Activated CD8-positive, alpha-beta T cell treated with anti-CD3 and anti-CD28 coated beads for 36 hours (primary cell): ENCODE measurements at regions of chr6 and their contacts with region 1.

Region 1: GRCh38 chr6:1524040-1524480 is 85.7 kb upstream of the FOXC1 start:
- DNase-seq: peak; percentile 69
- ATAC-seq: peak; percentile 71
- H3K4me3 Mint-ChIP-seq: peak overlapping the region; percentile 29
- H3K27ac Mint-ChIP-seq: no peak overlapping the region
- H3K4me1 Mint-ChIP-seq: peaks cover 22% of the 10 kb centered on the region
- H3K27me3 Mint-ChIP-seq: peaks cover 6% of the 10 kb centered on the region
- CTCF ChIP-seq: peak; percentile 78

Region 2: GRCh38 chr6:1547785-1548184 is 23.7 kb after region 1 on chr6:
- CTCF ChIA-PET with region 1: interaction called, 10 read pairs
- POLR2A ChIA-PET with region 1: no interaction called
- intact Hi-C with region 1: no loop called
- DNase-seq: no peak
- ATAC-seq: no peak
- H3K4me3 Mint-ChIP-seq: no peak overlapping the region
- H3K27ac Mint-ChIP-seq: no peak overlapping the region
- H3K4me1 Mint-ChIP-seq: no peaks in the 10 kb centered on the region
- H3K27me3 Mint-ChIP-seq: peaks cover 1% of the 10 kb centered on the region
- CTCF ChIP-seq: no peak

Region 3: DNA sequence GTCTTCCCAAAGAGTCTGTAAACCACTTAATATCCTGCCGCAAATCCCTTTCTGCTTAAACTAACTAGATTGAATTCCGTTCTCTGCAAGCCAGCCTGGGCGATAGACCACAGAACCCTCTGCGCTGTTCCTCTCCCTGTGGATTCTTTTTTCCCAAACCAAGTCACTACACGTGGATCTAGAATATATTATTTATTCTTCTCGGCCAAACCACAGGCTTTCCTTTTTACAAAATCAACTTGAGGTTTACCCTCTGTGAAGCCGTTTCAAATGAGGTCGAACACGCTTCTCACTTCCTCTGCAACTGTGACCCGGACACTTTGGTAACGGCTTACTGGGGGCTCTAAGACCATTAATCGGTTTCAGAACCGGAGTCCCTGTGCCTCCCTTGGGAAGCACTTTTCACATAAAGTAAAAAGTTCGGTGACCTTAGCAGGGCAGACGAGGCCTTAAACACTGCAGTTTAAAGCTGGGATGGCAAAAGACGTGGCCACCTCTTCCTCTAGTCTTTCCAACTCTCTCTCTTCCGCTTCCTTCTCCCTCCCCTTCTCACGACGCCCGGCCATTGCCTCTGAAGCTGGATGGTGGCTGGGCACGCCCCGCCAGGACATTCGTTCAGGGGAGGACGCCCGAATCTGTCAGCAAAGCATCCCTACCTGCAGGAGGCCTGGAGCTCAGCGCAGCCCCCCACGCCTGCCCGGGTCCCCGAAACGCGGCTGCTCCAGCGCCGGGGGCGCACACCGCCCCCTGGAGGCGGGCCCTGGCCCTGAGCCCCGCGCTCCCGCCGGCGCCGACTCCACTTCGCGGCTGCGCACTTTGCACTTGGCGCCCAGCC is 30.6 kb after region 1 on chr6:
- CTCF ChIA-PET with region 1: interaction called, 22 read pairs
- POLR2A ChIA-PET with region 1: no interaction called
- intact Hi-C with region 1: no loop called
- DNase-seq: peak; percentile 62
- ATAC-seq: peak; percentile 92
- H3K4me3 Mint-ChIP-seq: peak overlapping the region; percentile 72
- H3K27ac Mint-ChIP-seq: peak overlapping the region; percentile 73
- H3K4me1 Mint-ChIP-seq: peaks cover 10% of the 10 kb centered on the region
- H3K27me3 Mint-ChIP-seq: peaks cover 27% of the 10 kb centered on the region
- CTCF ChIP-seq: peak; percentile 75